ENCODE measurements at regions of chr13 and their contacts with region 1.

Region 1: DNA sequence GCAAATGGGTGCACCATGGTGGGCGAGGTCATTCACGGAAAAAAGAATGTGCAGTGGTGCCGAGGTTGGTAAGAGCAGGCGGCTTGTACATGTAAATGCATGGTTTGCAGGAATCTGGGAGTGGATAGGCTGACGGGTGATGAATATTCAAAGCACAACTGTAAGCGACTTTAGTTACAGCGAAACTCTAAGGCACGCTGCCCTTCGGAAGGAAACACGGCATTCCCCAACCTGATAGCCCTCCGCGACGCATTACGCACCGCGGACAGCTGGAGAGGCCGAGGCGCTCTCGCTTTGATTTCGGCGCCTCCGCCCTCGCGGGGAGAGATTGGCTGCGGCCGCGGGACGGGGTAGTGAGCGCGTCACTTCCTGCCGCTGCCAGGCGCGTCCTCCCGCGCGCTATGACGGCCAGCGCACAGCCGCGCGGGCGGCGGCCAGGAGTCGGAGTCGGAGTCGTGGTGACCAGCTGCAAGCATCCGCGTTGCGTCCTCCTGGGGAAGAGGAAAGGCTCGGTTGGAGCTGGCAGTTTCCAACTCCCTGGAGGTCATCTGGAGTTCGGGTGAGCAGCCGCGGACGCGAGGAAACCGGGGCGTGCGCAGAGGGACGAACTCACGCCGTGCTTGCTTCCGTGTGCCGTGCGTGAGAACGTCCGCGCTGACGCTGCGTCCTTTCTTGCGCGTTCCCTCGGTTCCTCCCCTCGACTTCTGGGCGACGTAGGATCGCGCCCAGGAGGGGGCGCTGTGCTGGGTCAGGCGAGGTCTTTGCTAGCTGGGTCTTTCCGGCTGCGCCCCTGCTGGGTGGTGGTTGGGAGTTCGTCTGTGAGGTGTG is at the start of gene NUDT15:
- DNase-seq: peak; percentile 96
- H3K4me3 Mint-ChIP-seq: peak within 1 kb of the TSS; percentile 95
- H3K27ac Mint-ChIP-seq: peak within 1 kb of the TSS; percentile 95
- H3K4me1 Mint-ChIP-seq: peaks cover 42% of the 10 kb centered on the region
- H3K27me3 Mint-ChIP-seq: no peaks in the 10 kb centered on the region
- total RNA-seq, gene NUDT15: 28.3 to 29.2 TPM

Region 2: GRCh38 chr13:46796515-46797474 is 1240.8 kb before region 1 on chr13 and contains the start of gene ESD:
- CTCF ChIA-PET with region 1: no interaction called
- intact Hi-C with region 1: loop called (anchors 1 kb)
- DNase-seq: peak; percentile 98
- H3K4me3 Mint-ChIP-seq: peak within 1 kb of the TSS; percentile 93
- H3K27ac Mint-ChIP-seq: peak within 1 kb of the TSS; percentile 95
- H3K4me1 Mint-ChIP-seq: peaks cover 32% of the 10 kb centered on the region
- H3K27me3 Mint-ChIP-seq: no peaks in the 10 kb centered on the region
- total RNA-seq, gene ESD: 150 to 153 TPM

Region 3: DNA sequence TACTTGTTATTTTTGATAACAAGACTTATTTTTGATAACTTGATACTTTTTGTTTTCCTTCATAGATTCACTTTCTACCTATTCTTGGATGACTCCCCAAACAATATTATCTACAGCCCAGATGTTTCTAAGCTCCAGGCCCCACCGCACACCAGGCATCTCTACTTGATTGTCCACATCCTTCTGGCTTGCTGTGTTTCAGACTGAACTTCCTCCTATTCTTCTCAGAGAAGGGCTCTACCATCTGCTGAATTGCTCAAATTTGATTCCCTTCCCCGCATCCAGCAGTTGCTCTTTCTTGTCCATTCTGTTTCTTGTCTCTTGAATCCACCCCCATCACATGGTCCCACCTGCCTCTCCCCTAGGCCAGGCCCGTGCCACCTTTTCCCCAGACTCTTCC is 13.0 kb after region 1 on chr13:
- CTCF ChIA-PET with region 1: interaction called, 16 read pairs
- intact Hi-C with region 1: no loop called
- DNase-seq: no peak
- H3K4me3 Mint-ChIP-seq: no peak overlapping the region
- H3K27ac Mint-ChIP-seq: no peak overlapping the region
- H3K4me1 Mint-ChIP-seq: no peaks in the 10 kb centered on the region
- H3K27me3 Mint-ChIP-seq: no peaks in the 10 kb centered on the region

Region 4: DNA sequence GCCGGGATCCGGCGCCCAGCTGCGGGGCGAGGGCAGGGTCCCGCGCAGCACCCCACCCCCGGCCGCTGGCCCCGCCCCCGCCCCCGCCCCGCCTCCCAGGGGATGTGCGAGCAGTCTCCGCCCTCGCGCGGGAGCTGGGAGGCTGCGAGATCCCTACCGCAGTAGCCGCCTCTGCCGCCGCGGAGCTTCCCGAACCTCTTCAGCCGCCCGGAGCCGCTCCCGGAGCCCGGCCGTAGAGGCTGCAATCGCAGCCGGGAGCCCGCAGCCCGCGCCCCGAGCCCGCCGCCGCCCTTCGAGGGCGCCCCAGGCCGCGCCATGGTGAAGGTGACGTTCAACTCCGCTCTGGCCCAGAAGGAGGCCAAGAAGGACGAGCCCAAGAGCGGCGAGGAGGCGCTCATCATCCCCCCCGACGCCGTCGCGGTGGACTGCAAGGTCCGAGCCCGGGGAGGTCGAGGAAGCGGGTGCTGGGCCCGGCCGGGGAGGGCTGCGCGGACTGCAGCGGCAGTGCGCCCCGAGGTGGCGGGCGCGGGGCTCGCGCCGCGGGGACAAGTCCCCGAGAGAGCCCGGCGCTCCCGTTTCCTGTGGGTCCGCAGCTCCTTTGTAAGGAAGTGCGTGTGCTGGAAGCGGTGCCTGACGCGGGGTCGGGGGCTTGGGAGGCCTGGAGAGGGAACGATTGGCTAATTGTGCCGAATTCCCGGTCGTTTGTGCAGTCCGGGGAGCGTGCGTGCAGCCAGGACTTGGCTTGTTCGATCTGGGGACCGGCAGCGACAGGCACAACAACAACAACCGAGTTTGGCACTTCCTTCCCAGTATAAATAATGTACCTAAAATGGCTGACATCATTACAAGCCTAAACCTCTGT is 195.7 kb after region 1 on chr13 and contains the start of gene ITM2B:
- CTCF ChIA-PET with region 1: interaction called, 3 read pairs
- intact Hi-C with region 1: loop called (anchors 1 kb)
- DNase-seq: peak; percentile 70
- H3K4me3 Mint-ChIP-seq: peak within 1 kb of the TSS; percentile 87
- H3K27ac Mint-ChIP-seq: peak within 1 kb of the TSS; percentile 94
- H3K4me1 Mint-ChIP-seq: peaks cover 60% of the 10 kb centered on the region
- H3K27me3 Mint-ChIP-seq: no peaks in the 10 kb centered on the region
- total RNA-seq, gene ITM2B: 110 to 112 TPM

Region 5: GRCh38 chr13:48532506-48533499 is 495.2 kb after region 1 on chr13 and contains the start of gene RCBTB2:
- CTCF ChIA-PET with region 1: interaction called, 4 read pairs
- intact Hi-C with region 1: loop called (anchors 2 kb)
- DNase-seq: peak; percentile 98
- H3K4me3 Mint-ChIP-seq: peak within 1 kb of the TSS; percentile 93
- H3K27ac Mint-ChIP-seq: peak within 1 kb of the TSS; percentile 97
- H3K4me1 Mint-ChIP-seq: peaks cover 17% of the 10 kb centered on the region
- H3K27me3 Mint-ChIP-seq: no peaks in the 10 kb centered on the region
- total RNA-seq, gene RCBTB2: 1.2 to 1.4 TPM

Region 6: GRCh38 chr13:49495783-49496762 is 1458.5 kb after region 1 on chr13 and contains the start of gene PHF11:
- CTCF ChIA-PET with region 1: no interaction called
- intact Hi-C with region 1: loop called (anchors 5 kb)
- DNase-seq: peak; percentile 95
- H3K4me3 Mint-ChIP-seq: peak within 1 kb of the TSS; percentile 91
- H3K27ac Mint-ChIP-seq: peak within 1 kb of the TSS; percentile 96
- H3K4me1 Mint-ChIP-seq: peaks cover 49% of the 10 kb centered on the region
- H3K27me3 Mint-ChIP-seq: no peaks in the 10 kb centered on the region
- total RNA-seq, gene PHF11: 91.4 to 96.9 TPM